ENCODE measurements at regions of chr1 and their contacts with region 1.

Region 1: DNA sequence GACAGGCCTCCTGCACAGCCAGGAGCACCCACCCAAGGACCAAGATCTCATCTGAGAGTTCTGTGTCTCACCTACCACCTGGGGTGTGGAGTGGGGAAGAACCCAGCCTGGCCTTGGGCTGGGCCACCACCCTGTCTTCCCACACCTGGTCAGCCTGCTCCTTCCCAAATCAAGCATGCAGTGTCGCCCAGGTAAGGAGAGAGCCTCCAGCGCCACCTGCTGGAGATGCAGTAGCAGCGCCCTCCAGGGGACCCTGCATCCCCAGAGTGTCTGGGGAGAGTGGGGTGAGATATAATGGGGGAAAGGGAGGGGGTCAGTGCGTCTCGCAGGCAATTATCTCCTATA is 32.3 kb downstream of the KIAA2013 start:
- DNase-seq: peak; percentile 43
- H3K4me3 ChIP-seq: no peak overlapping the region
- H3K27ac ChIP-seq: no peak overlapping the region
- H3K4me1 ChIP-seq: no peaks in the 10 kb centered on the region
- H3K27me3 ChIP-seq: peaks cover 41% of the 10 kb centered on the region
- CTCF ChIP-seq: peak; percentile 92

Region 2: DNA sequence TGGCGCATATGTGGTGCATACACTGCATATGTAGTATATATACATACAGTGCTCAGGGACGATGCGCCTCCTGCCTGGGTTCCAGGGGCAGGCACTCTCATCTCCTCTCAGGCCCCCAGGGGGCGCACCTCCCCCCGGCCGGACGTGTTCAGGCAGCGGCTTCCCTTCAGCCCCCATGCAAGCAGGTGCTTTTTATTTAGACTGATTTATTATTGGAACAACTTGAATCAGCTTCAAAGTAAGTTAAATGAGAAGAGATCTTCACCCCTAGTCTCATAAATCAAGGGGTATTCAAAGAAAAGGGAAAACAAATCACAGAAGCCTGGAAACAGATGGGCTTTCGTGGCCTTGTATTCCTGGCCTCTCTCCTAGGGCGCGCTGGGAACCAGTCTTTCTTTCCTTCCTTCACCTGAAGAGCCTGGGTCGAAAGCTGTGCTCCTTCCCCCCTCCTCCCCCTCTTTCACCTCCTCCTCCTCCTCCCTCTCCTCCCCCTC is 556.3 kb before region 1 on chr1:
- CTCF ChIA-PET with region 1: no interaction called
- POLR2A ChIA-PET with region 1: no interaction called
- intact Hi-C with region 1: no loop called
- DNase-seq: peak; percentile 70
- H3K4me3 ChIP-seq: no peak overlapping the region
- H3K27ac ChIP-seq: no peak overlapping the region
- H3K4me1 ChIP-seq: peaks cover under 1% of the 10 kb centered on the region
- H3K27me3 ChIP-seq: peaks cover 26% of the 10 kb centered on the region
- CTCF ChIP-seq: peak; percentile 93

Region 3: DNA sequence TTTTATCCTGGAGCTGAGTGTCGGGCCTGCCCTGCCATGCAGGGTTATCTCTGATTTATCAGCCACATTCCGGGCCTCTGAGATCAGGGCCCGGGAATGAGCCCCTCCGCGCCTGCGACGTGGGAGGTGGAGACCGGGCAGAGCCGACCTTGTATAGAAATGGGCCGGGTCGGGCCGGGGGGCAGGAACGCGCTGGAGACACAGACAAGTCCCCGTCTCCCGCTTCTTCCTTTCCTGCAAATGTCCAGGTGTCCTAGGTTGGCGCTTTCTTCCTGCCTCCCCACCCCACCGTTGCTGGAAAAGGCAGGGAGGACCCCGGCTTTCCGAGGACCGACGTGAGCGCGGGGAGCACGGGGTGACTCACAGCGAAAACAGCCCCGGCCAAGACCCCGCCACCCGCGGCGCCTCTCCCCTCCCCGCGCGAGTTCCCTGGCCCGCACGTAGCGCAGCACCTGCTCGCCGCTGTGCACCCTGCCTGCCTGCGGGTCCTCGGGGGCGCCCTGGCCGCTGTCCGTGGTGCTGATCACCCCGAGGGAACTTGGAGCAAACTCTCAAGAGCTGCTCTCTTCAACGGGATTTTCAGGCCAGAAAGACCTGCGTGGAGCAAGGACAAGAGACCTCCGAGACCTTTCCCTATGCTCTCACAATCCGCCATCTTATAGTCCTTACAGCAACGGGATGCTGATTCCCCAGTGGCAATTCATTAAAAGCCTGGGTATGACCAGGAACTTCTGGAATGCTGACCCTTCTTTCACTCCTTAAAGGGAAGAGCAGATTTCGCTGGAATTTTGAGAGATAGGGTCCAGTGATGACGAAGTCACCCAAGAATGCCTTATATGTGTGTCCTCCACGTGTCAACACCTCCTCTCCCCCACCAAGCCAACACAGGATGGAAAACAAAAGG is 34.7 kb before region 1 on chr1:
- CTCF ChIA-PET with region 1: interaction called, 10 read pairs
- POLR2A ChIA-PET with region 1: no interaction called
- intact Hi-C with region 1: loop called (anchors 5 kb)
- DNase-seq: peak; percentile 75
- H3K4me3 ChIP-seq: no peak overlapping the region
- H3K27ac ChIP-seq: no peak overlapping the region
- H3K4me1 ChIP-seq: no peaks in the 10 kb centered on the region
- H3K27me3 ChIP-seq: peaks cover 74% of the 10 kb centered on the region
- CTCF ChIP-seq: peak; percentile 27

Region 4: DNA sequence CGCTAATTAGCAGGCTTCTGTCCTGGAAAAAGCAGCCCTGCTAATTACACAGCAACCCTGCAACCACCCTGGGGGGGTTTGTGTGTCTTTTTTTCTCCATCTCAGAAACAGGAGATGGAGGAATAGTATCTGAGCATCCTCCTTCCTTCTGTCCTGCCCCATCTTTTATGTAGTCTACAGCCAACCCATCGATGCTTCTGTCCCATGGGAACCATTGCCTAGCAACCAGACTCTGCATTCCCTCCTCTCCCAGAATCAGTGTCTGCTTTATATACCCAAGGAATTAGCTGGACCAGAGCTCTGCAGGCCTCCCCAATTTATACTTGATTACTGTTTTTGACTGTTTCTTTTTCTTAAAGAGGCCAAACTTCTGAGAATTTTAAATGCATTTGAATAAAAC is 1584.8 kb after region 1 on chr1:
- CTCF ChIA-PET with region 1: no interaction called
- POLR2A ChIA-PET with region 1: no interaction called
- intact Hi-C with region 1: no loop called
- DNase-seq: no peak
- H3K4me3 ChIP-seq: no peak overlapping the region
- H3K27ac ChIP-seq: no peak overlapping the region
- H3K4me1 ChIP-seq: no peaks in the 10 kb centered on the region
- H3K27me3 ChIP-seq: no peaks in the 10 kb centered on the region
- CTCF ChIP-seq: no peak

Measured in A673 (cell line).